ENCODE measurements at regions of chr7 and their contacts with region 1.

Region 1: DNA sequence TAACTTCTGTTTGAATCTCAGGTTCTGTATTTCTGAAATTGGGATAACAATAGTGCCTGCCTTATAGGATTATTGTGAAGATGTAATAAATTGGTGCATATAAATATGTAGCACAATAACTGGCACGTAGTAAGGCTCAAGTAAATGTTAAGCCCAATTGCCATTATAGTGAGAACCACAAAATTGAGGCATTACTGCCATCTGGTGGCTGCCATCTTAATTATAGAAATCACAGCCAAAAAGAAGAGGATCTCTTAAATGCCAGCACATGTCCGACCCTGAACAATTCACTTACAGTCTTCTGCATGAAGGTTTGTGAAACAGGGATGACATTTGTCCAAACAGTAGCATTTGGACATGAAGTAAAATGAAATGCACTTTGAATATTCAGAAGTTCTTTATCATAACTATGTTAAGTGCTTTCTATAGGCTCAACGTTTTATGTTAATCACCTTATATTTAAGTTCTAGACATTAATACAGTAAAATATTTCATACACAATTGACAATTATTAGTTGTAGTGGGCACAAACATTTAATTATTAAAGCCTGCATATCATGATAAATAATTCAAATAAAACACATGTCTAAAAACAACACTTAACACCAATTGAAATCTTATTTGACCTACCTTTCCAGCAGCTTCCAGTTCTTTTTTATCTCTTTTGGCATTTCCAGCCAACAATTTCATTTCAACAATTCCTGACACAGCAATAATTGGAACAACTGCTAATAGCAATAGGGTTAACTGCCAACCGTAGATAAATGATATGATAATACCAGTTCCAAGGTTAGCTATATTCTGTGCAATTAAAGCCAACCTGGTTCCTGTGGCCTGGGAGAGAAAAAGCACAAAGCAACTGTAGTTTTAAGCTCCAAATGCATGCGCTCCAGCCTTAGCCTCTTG is 58.5 kb downstream of the ABCB4 start:
- DNase-seq: peak; percentile 30 to 59
- H3K4me3 ChIP-seq: no peak overlapping the region
- H3K27ac ChIP-seq: no peak overlapping the region
- H3K4me1 ChIP-seq: no peaks in the 10 kb centered on the region
- H3K27me3 ChIP-seq: no peaks in the 10 kb centered on the region
- CTCF ChIP-seq: peak; percentile 59 to 79 (median 72)
- POLR2A ChIP-seq: no peak

Region 2: GRCh38 chr7:87206361-87206760 is 210.6 kb before region 1 on chr7:
- intact Hi-C with region 1: no loop called
- DNase-seq: no peak
- H3K4me3 ChIP-seq: no peak overlapping the region
- H3K27ac ChIP-seq: no peak overlapping the region
- H3K4me1 ChIP-seq: no peaks in the 10 kb centered on the region
- H3K27me3 ChIP-seq: no peaks in the 10 kb centered on the region
- CTCF ChIP-seq: no peak
- POLR2A ChIP-seq: no peak

Region 3: DNA sequence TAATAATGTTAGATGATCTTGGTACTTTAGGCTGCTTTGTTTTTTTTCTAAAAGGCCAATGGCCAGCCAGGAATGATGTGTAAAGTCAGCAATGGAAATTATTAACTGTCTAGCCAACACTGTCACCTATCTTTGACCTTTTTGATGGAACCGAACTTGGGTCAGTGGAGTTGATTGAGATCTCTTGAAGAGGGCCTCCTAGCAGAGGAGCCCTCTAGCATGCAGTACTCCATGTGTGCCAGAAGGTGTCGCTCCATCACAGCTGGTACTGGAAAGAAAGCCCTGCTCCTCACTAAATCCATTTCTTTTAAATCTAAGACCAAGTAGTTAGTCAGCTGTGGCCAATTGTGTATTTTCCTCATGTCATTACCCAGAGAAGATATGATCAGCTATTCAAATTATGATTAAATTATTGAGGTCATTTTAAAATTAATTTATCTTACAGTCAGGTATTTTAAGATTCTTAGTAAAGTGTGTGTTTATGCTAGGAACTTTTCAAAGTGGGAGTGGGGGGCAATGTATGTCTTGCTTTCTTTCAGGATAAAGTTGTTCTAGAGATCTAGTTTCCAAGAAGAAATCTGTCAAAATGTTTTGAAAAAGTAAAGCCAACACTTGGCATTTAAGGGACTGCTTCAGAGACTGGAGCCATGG is 104.6 kb before region 1 on chr7:
- intact Hi-C with region 1: loop called (anchors 5 kb)
- DNase-seq: peak; percentile 45
- H3K4me3 ChIP-seq: no peak overlapping the region
- H3K27ac ChIP-seq: no peak overlapping the region
- H3K4me1 ChIP-seq: no peaks in the 10 kb centered on the region
- H3K27me3 ChIP-seq: no peaks in the 10 kb centered on the region
- CTCF ChIP-seq: peak; percentile 87 to 93 (median 90)
- POLR2A ChIP-seq: no peak

Region 4: GRCh38 chr7:87543623-87544022 is 126.7 kb after region 1 on chr7:
- intact Hi-C with region 1: no loop called
- DNase-seq: no peak
- H3K4me3 ChIP-seq: no peak overlapping the region
- H3K27ac ChIP-seq: no peak overlapping the region
- H3K4me1 ChIP-seq: no peaks in the 10 kb centered on the region
- H3K27me3 ChIP-seq: no peaks in the 10 kb centered on the region
- CTCF ChIP-seq: no peak
- POLR2A ChIP-seq: no peak

Measured in uterus (tissue), 4 donors.